Activated T-helper 1 cell treated with anti-CD3 and anti-CD28 coated beads, Interleukin-12 subunit alpha, Interleukin-12 subunit beta, Interleukin-2, Interleukin-4 antibody, amounts not matched to agents 30 ng/mL and 10 ng/mL and 1 ng/mL, durations not matched to agents 14 hours and 24 hours and 36 hours (primary cell): ENCODE measurements at regions of chr2 and their contacts with region 1.

Region 1: GRCh38 chr2:118855451-118856279 is 8.2 kb upstream of the EN1 start:
- DNase-seq: peak; percentile 71
- H3K4me3 Mint-ChIP-seq: peak overlapping the region; percentile 66
- H3K27ac Mint-ChIP-seq: peak overlapping the region; percentile 65
- H3K4me1 Mint-ChIP-seq: peaks cover 4% of the 10 kb centered on the region
- H3K27me3 Mint-ChIP-seq: peaks cover 81% of the 10 kb centered on the region

Region 2: DNA sequence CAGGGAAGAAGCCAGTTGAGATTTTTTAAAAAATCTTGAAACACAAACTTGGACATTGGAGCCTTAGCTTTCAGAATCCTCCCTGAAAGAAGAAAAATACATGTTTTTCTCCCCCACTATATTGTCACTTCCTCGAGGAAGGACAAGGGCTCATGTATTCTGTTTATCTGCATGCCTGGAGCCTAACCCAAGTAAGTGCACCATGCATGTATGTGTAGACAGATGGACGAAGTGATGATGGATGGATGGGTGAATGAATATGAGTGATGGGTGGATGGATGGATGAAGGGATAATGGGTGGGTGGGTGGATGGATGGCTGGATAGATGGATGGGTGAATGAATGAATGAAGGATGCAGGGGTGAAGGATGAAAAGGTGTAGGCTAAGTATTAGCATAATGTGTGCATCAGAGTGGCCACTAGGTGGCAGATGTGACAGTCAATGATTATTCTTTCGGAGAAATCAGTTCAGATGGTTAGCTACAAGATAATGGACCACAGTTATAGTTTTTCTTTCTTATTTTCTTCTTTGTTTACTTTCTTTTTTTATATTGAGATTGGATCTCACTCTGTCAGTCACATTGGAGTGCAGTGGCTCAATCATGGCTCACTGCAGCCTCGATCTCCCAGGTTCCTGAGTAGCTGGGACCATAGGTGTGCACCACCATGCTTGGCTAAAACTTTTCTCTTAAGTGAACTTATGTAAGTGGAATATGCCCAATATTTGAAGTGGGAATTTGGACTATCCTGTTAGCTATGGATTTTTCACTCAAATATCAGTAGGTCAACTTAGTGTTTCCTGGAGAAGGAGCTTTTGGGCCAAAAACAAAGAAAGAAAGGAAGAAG is 823.3 kb before region 1 on chr2:
- intact Hi-C with region 1: loop called (anchors 1 kb)
- DNase-seq: no peak
- H3K4me3 Mint-ChIP-seq: no peak overlapping the region
- H3K27ac Mint-ChIP-seq: no peak overlapping the region
- H3K4me1 Mint-ChIP-seq: no peaks in the 10 kb centered on the region
- H3K27me3 Mint-ChIP-seq: peaks cover 32% of the 10 kb centered on the region

Region 3: GRCh38 chr2:118221666-118222594 is 633.7 kb before region 1 on chr2:
- intact Hi-C with region 1: loop called (anchors 1 kb)
- DNase-seq: peak; percentile 40
- H3K4me3 Mint-ChIP-seq: no peak overlapping the region
- H3K27ac Mint-ChIP-seq: no peak overlapping the region
- H3K4me1 Mint-ChIP-seq: peaks cover 40% of the 10 kb centered on the region
- H3K27me3 Mint-ChIP-seq: peaks cover 54% of the 10 kb centered on the region

Region 4: GRCh38 chr2:118832792-118833715 is 22.6 kb before region 1 on chr2:
- intact Hi-C with region 1: loop called (anchors 2 kb)
- DNase-seq: no peak
- H3K4me3 Mint-ChIP-seq: no peak overlapping the region
- H3K27ac Mint-ChIP-seq: no peak overlapping the region
- H3K4me1 Mint-ChIP-seq: peaks cover 5% of the 10 kb centered on the region
- H3K27me3 Mint-ChIP-seq: peaks cover 59% of the 10 kb centered on the region

Region 5: DNA sequence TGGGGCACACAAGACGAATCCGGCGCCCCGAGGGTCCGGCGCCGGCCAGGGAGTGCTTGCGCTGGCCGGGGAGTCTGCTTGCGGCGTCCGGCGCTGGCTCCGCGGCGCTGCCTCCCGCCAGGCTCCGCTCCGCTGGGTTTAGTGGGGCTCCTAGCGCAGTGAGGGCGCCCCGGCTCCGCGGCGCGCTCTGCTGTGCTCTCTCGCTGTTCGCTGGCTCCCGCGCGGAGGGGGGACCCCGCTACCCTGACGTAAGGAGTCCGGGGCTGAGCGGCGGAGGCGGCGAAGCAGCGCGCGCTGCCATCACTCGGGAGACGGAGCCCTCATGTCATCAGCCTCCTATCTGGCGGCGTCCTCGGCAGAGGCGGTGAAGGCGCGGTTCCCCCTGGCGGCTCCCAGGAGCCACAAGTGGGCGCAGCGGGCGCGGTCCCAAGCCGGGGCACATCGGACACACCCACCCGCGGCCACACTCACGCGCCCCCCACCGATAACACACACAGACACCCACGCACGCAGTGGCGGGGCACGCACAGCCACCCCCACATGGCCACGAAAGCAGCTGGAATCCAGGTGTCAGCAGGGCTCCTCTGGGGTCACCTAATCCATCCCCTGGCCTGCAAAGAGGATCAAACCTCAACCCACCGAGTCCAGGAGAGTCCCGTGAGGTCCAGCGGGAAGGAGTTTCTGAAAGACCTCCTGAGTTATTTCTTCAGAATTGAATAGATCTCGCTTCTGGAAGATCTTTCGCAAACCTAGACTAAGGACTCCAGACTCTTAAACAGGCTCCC is 303.1 kb after region 1 on chr2 and contains the start of gene C1QL2:
- intact Hi-C with region 1: loop called (anchors 5 kb)
- DNase-seq: no peak
- H3K4me3 Mint-ChIP-seq: no peak within 1 kb of the TSS
- H3K27ac Mint-ChIP-seq: no peak within 1 kb of the TSS
- H3K4me1 Mint-ChIP-seq: no peaks in the 10 kb centered on the region
- H3K27me3 Mint-ChIP-seq: peaks cover 59% of the 10 kb centered on the region
- total RNA-seq, gene C1QL2: not detected in 2 replicates

Region 6: GRCh38 chr2:120343433-120344105 is 1487.9 kb after region 1 on chr2:
- intact Hi-C with region 1: loop called (anchors 10 kb)
- DNase-seq: peak; percentile 40
- H3K4me3 Mint-ChIP-seq: peak overlapping the region; percentile 33
- H3K27ac Mint-ChIP-seq: no peak overlapping the region
- H3K4me1 Mint-ChIP-seq: peaks cover 13% of the 10 kb centered on the region
- H3K27me3 Mint-ChIP-seq: peaks cover 61% of the 10 kb centered on the region